ENCODE measurements at regions of chr14 and their contacts with region 1.

Region 1: DNA sequence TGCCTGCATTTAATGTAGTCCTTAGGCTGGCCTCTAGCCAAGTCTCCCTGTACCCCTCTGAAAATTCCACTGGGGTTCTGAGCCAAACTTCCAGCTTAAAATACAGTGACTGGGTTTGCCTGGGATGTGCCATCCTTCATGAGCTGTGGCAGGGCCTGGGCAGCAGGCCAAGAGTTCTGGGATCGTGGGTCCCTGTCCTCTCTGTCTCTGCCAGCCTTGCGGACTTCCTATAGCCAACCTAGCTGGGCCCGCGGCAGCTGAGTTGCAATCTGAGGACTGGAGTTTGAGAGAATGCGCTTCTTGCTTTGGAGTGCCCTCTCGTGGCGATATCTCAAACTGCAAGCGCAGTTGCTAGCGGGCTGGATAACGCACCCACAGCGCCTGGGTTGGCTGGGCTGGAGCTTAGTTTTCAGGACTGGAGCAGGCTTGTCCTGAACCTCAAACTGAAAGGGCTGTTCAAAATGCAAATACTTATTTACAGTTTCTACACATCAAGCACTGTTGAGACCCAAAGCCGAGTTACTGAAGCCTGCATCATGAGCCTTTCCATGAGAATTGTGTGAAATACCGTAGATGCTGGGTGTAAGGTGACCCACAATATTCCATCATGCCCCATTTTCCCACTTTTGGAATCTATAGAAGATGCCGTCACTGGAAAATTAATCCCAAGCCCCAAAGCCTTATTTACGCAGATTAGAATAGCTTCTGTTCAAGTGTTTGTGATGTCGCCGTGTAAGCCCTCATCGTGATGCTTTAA is 7.3 kb upstream of the IFI27L2 start:
- DNase-seq: peak; percentile 97
- H3K4me3 ChIP-seq: no peak overlapping the region
- H3K27ac ChIP-seq: no peak overlapping the region
- H3K4me1 ChIP-seq: peaks cover 0 to 5% (median 2%) of the 10 kb centered on the region in 4 donors
- H3K27me3 ChIP-seq: peaks cover 0 to 5% (median 0%) of the 10 kb centered on the region in 4 donors
- CTCF ChIP-seq: peak in 2 of 3 experiments; percentile 95
- EP300 ChIP-seq: no peak
- POLR2A ChIP-seq: no peak

Region 2: DNA sequence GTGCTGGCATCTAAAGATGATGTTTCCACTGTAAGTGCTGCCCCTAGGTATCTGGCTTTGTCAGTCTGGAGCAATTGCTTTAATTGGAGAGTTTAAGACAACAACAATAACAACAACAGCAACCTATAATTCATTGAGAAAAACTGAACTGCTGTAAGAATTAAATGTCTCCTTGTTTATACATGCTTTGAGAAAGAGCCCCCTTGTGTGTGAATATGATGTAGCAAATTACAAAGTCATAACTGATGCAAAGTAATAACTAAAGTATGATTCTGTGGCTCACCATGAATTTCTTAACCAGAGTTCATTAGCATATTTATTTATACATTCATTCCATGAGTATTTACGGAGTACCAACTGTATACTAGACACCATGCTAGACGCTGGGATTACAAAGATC is 289.3 kb before region 1 on chr14:
- intact Hi-C with region 1: no loop called
- DNase-seq: no peak
- H3K4me3 ChIP-seq: no peak overlapping the region
- H3K27ac ChIP-seq: no peak overlapping the region
- H3K4me1 ChIP-seq: peaks cover 0 to 5% (median 4%) of the 10 kb centered on the region in 4 donors
- H3K27me3 ChIP-seq: no peaks in the 10 kb centered on the region
- CTCF ChIP-seq: no peak
- EP300 ChIP-seq: no peak
- POLR2A ChIP-seq: no peak

Region 3: DNA sequence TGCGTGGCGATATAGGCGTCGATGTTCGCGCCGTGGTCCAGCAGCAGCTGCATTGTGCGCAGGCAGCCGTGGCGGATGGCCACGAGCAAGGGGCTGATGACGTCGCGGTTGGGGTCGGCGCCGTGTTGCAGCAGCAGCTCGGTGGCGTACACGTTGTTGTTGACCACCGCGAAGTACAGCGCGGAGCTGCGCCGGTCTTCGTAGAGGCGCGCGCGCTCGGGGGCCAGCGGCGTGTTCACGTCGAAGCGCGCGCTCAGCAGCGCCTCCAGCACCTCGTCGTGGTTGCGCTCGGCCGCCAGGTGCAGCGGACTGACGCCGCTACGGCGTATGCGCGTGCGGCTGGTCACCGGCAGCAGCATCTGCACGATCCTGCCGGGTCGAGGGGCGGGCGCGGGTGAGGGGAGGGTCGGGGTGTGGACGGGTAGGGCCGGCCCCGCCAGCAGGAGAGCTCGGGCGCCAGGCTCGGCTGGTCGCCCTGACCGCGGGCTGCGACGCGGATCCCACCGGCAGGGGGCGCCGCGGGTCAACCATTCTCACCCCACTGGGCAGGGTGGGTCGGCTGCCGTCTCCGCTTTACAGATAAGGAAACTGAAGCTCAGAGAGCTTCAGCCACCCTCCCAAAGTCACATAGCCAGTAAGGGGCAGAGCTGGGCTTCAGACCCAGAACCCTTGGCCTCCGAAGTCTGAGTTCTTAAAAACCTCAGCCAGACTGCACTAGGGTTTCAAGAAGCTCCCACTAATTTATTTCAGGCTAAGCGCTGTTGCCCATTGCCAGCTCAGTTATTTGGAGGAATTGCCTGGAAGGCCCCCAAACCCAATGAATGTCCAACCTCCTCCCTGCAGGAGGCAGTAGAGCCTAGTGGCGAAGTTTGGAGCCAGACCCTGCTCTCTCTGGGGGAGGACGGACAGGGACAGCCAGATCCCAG is 197.2 kb before region 1 on chr14:
- intact Hi-C with region 1: loop called (anchors 10 kb)
- DNase-seq: peak; percentile 93
- H3K4me3 ChIP-seq: peak overlapping the region; percentile 30 to 55 (median 38)
- H3K27ac ChIP-seq: peak overlapping the region; percentile 80 to 94 (median 88)
- H3K4me1 ChIP-seq: peaks cover 10 to 84% (median 79%) of the 10 kb centered on the region in 4 donors
- H3K27me3 ChIP-seq: peaks cover 0 to 10% (median 0%) of the 10 kb centered on the region in 4 donors
- CTCF ChIP-seq: peak; percentile 79 to 95 (median 88)
- EP300 ChIP-seq: no peak
- POLR2A ChIP-seq: no peak

Region 4: GRCh38 chr14:94036313-94037050 is 100.3 kb before region 1 on chr14:
- intact Hi-C with region 1: loop called (anchors 2 kb)
- DNase-seq: no peak
- H3K4me3 ChIP-seq: no peak overlapping the region
- H3K27ac ChIP-seq: no peak overlapping the region
- H3K4me1 ChIP-seq: peaks cover 0 to 3% (median under 1%) of the 10 kb centered on the region in 4 donors
- H3K27me3 ChIP-seq: no peaks in the 10 kb centered on the region
- CTCF ChIP-seq: peak; percentile 71 to 87 (median 79)
- EP300 ChIP-seq: no peak
- POLR2A ChIP-seq: no peak

Region 5: DNA sequence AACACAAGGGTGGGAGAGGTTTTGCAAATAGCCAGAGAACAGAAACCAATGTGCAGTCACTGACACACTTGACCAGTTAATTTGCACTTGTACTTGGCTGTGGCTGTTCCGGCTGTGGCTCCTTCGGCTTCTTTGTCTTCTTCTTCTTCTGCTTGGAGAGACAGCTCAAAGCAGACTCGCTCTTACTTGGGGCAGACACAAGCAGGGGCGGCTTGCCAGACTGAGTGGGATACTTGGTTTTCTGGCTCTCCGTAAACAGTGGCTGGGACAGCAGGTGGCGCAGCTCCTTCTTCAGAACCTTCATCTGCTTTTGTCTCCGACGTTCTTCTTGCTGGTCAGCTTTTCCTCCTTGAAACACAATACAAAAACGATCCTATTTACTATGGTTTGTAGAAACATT is 85.6 kb before region 1 on chr14:
- intact Hi-C with region 1: loop called (anchors 5 kb)
- DNase-seq: peak; percentile 92
- H3K4me3 ChIP-seq: no peak overlapping the region
- H3K27ac ChIP-seq: peak overlapping the region in 3 of 4 donors; percentile 14 to 46 (median 33)
- H3K4me1 ChIP-seq: peaks cover 20 to 32% (median 31%) of the 10 kb centered on the region in 4 donors
- H3K27me3 ChIP-seq: no peaks in the 10 kb centered on the region
- CTCF ChIP-seq: peak; percentile 41 to 54 (median 51)
- EP300 ChIP-seq: no peak
- POLR2A ChIP-seq: no peak

Region 6: DNA sequence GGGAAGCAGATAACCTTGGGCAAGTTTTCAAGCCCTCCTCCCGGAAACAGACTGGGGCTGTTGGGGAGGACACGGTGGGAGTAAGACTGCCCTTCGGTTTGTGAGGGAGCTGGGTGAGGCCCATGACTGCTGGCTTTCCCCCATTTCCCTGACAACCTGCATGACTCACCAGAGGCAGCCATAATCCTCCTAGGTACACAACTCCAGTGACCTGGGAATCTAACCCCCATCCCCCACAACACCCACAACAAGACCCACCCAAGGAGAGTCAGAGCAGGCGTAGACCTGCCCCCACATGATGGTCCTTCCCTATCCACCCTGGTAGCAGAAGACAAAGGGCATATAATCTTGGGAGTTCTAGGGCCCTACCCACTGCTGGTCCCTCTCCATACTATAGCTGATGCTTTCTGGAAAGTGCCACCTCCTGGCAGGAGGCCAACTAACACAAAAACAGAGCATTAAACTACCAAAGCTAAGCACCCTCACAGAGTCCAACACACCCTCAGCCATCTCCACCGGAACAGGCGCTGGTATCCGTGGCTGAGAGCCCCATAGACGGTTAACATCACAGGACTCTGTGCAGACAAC is 70.6 kb before region 1 on chr14:
- intact Hi-C with region 1: no loop called
- DNase-seq: no peak
- H3K4me3 ChIP-seq: no peak overlapping the region
- H3K27ac ChIP-seq: no peak overlapping the region
- H3K4me1 ChIP-seq: peaks cover 29 to 61% (median 42%) of the 10 kb centered on the region in 4 donors
- H3K27me3 ChIP-seq: no peaks in the 10 kb centered on the region
- CTCF ChIP-seq: no peak
- EP300 ChIP-seq: no peak
- POLR2A ChIP-seq: no peak

Region 7: DNA sequence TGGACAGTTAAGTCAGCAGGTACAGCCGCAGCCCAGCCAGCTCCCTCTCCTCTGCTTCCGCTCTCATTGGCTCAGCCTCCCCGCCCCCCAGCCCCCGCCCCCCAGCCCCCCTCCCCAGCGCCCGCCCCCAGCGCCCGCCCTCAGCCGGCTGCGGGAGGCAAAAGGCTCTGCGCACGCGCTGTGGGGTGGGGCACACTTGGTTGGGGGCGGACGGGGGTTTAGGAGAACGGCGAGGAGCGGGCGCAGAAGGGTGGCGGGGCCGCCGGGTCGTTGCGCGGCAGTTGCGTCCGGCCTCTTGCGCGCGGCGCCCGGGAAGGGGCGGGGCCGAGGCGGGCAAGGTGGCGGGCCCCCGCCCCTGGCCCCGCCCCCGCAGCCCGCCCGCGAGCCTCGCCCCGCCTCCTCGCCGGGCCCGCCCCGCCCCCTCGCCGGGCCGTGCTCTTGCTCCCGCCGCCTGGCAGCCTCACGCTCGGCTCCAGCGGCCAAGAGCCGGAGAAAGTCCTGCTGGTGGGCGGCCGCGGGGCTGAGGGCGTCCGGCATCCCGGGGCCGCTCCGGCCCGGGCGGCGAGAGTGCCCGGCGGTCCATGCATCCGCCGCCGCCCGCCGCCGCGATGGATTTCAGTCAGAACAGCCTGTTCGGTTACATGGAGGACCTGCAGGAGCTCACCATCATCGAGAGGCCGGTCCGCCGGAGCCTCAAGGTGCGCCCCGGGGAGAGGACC is 37.3 kb after region 1 on chr14 and contains the start of gene PPP4R4:
- intact Hi-C with region 1: loop called (anchors 2 kb)
- DNase-seq: no peak
- H3K4me3 ChIP-seq: peak within 1 kb of the TSS; percentile 65 to 79 (median 68)
- H3K27ac ChIP-seq: peak within 1 kb of the TSS in 3 of 4 donors; percentile 46
- H3K4me1 ChIP-seq: peaks cover 11 to 25% (median 24%) of the 10 kb centered on the region in 4 donors
- H3K27me3 ChIP-seq: peaks cover 2 to 83% (median 23%) of the 10 kb centered on the region in 4 donors
- CTCF ChIP-seq: no peak
- EP300 ChIP-seq: no peak
- POLR2A ChIP-seq: no peak
- total RNA-seq, gene PPP4R4: 0.19 to 0.83 (median 0.34) TPM in 3 of 4 donors, not detected in the other

Measured in esophagus muscularis mucosa (tissue), 4 donors.